Vagina (tissue), 2 donors: ENCODE measurements at regions of chr20 and their contacts with region 1.

Region 1: DNA sequence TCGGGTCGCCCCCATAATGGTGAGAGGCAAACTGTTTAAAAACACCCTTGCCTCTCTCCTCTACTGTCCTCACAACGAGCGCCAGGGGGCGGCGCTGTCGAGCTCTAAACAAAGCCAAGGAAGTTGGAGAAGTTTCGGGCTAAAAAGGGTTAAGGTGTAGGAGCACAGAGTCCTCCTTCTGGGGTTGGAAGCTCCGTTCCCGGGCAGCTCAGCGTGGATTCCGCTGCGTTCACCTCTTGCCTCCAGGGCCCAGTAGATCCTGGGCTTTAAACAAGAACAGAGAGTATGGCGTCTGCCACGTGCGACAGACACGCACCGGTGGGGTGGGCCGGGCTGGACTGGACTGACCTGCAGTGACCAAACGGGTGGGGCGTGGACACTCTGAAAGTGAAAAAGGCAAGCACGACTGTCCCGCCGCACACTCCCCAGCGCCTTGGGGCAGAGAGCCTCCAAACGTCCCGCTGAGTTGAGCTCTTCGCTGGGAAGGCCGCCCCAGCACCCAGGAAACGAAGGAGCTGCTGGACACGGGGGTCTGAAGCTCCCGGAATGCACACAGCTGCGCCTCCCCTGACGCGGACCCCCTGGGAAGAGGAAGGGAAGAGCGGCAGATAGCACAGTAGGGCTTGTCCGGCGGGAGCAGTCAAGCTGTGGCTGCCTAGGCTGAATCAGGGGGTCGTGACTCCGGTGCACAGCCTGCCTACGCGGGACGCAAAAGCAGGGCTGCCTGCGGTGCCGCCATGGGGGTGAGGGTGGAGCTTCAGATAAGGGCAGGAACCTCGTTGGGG is 1.6 kb upstream of the THBD start:
- DNase-seq: no peak
- H3K4me3 ChIP-seq: peak overlapping the region; percentile 48 to 49
- H3K27ac ChIP-seq: peak overlapping the region; percentile 67
- H3K4me1 ChIP-seq: peaks cover 48% of the 10 kb centered on the region
- H3K27me3 ChIP-seq: no peaks in the 10 kb centered on the region
- CTCF ChIP-seq: peak; percentile 11 to 62 (median 41)
- POLR2A ChIP-seq: no peak

Region 2: GRCh38 chr20:22691369-22692118 is 359.5 kb before region 1 on chr20:
- intact Hi-C with region 1: loop called (anchors 10 kb)
- DNase-seq: peak in 1 of 2 donors; percentile 88
- H3K4me3 ChIP-seq: no peak overlapping the region
- H3K27ac ChIP-seq: no peak overlapping the region
- H3K4me1 ChIP-seq: peaks cover 5% of the 10 kb centered on the region
- H3K27me3 ChIP-seq: no peaks in the 10 kb centered on the region
- CTCF ChIP-seq: peak; percentile 85 to 89 (median 87)
- POLR2A ChIP-seq: no peak

Region 3: GRCh38 chr20:23349338-23350195 is 298.5 kb after region 1 on chr20:
- intact Hi-C with region 1: loop called (anchors 10 kb)
- DNase-seq: peak in 1 of 2 donors; percentile 93
- H3K4me3 ChIP-seq: peak overlapping the region; percentile 93 to 99
- H3K27ac ChIP-seq: peak overlapping the region; percentile 98
- H3K4me1 ChIP-seq: peaks cover 26% of the 10 kb centered on the region
- H3K27me3 ChIP-seq: no peaks in the 10 kb centered on the region
- CTCF ChIP-seq: peak in 2 of 3 experiments; percentile 33 to 42
- POLR2A ChIP-seq: no peak